ENCODE measurements at regions of chr3 and their contacts with region 1.

Region 1: DNA sequence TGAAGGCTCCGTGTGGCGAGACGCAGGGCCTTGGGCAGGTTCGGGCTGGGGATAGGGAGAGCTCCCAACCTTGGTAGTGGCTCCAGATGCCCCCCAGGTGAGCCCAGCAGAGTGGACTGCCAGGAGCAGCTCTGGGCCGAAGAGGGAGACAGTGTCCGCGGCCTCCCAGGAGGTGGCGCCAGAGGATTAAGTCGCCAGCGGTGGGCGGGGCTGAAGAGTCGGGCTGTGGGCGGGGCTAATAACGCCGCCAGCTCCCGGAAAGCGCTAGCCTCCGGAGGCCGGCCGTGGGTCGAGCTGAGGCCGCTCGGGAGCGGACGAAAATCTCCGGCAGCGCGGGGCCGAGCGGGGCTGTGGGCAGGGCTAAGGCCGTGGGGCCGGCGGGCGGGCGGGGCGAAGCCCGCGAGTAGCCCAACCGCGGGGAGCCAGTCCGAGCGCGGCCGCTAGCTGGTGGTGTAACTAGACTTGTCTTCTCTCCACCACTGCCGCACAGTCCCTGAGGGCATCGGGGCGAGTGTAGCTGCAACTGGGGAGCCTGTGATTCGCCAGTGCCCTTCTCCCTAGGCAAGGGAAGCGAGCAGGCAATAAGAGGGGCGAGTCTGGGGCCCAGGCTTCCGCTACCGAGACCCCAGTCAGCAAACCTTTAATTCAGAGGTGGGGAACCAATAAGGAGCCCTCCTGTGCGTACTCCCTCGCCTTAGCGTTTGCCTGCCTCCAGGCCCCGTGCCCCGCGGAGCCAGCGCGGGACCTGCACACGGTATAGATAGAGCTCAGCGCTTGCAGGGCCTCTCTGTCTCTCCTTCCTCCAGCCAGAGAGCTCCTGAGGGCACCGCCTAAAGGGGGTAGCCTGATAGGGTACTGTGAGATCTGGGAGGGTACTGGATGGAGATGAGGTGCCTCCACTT is 14.4 kb upstream of the BSN start:
- DNase-seq: peak; percentile 84 to 94
- H3K4me3 ChIP-seq: peak overlapping the region; percentile 49 to 67 (median 56)
- H3K27ac ChIP-seq: peak overlapping the region; percentile 68 to 78
- H3K4me1 ChIP-seq: peaks cover 0 to 7% of the 10 kb centered on the region in 2 donors
- H3K27me3 ChIP-seq: no peaks in the 10 kb centered on the region
- CTCF ChIP-seq: peak; percentile 49 to 93 (median 87)
- POLR2A ChIP-seq: no peak

Region 2: GRCh38 chr3:49673715-49674496 is 134.0 kb after region 1 on chr3 and contains the start of gene APEH:
- intact Hi-C with region 1: loop called (anchors 5 kb)
- DNase-seq: peak; percentile 93 to 95
- H3K4me3 ChIP-seq: peak within 1 kb of the TSS; percentile 76 to 95 (median 91)
- H3K27ac ChIP-seq: peak within 1 kb of the TSS; percentile 91 to 94
- H3K4me1 ChIP-seq: peaks cover 3 to 6% of the 10 kb centered on the region in 2 donors
- H3K27me3 ChIP-seq: no peaks in the 10 kb centered on the region
- CTCF ChIP-seq: no peak
- POLR2A ChIP-seq: peak; percentile 23
- total RNA-seq, gene APEH: 69.5 to 80.0 (median 70.1) TPM

Region 3: DNA sequence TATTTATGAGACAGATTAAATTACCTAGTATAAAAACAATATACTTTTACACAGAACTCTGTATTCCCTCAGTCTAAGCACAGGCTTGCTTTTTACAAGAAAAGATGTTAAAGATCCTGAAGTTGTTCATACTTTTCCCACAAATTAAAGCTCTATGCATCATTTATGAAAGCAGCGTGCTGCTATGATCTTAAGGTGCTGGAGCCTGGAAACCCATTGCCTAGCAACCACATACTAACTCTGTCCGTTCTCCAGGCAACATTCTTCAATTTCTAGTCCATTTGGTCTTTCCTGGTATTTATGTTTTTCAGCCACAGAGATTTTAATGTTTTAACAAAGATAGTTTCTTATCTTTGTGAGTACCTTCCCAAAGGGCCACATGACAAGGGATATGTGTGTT is 1446.8 kb after region 1 on chr3:
- intact Hi-C with region 1: no loop called
- DNase-seq: no peak
- H3K4me3 ChIP-seq: no peak overlapping the region
- H3K27ac ChIP-seq: no peak overlapping the region
- H3K4me1 ChIP-seq: no peaks in the 10 kb centered on the region
- H3K27me3 ChIP-seq: no peaks in the 10 kb centered on the region
- CTCF ChIP-seq: no peak
- POLR2A ChIP-seq: no peak